ENCODE measurements at regions of chr16 and their contacts with region 1.

Region 1: GRCh38 chr16:87076950-87077749 is 240.0 kb downstream of the C16orf95 start:
- DNase-seq: no peak
- ATAC-seq: peak; percentile 52
- H3K4me3 Mint-ChIP-seq: no peak overlapping the region
- H3K27ac Mint-ChIP-seq: no peak overlapping the region
- H3K4me1 Mint-ChIP-seq: peaks cover 6% of the 10 kb centered on the region
- H3K27me3 Mint-ChIP-seq: peaks cover 2% of the 10 kb centered on the region
- CTCF ChIP-seq: no peak

Region 2: GRCh38 chr16:86575754-86576557 is 501.2 kb before region 1 on chr16:
- CTCF ChIA-PET with region 1: no interaction called
- POLR2A ChIA-PET with region 1: no interaction called
- intact Hi-C with region 1: loop called (anchors 5 kb)
- DNase-seq: no peak
- ATAC-seq: peak; percentile 54
- H3K4me3 Mint-ChIP-seq: peak overlapping the region; percentile 75
- H3K27ac Mint-ChIP-seq: no peak overlapping the region
- H3K4me1 Mint-ChIP-seq: peaks cover 15% of the 10 kb centered on the region
- H3K27me3 Mint-ChIP-seq: peaks cover 78% of the 10 kb centered on the region
- CTCF ChIP-seq: no peak

Measured in activated B cell treated with CpG ODN at 0.5 μM for 24 hours (primary cell).